Right ventricle myocardium superior (tissue), 1 donor: ENCODE measurements at regions of chr2 and their contacts with region 1.

Region 1: DNA sequence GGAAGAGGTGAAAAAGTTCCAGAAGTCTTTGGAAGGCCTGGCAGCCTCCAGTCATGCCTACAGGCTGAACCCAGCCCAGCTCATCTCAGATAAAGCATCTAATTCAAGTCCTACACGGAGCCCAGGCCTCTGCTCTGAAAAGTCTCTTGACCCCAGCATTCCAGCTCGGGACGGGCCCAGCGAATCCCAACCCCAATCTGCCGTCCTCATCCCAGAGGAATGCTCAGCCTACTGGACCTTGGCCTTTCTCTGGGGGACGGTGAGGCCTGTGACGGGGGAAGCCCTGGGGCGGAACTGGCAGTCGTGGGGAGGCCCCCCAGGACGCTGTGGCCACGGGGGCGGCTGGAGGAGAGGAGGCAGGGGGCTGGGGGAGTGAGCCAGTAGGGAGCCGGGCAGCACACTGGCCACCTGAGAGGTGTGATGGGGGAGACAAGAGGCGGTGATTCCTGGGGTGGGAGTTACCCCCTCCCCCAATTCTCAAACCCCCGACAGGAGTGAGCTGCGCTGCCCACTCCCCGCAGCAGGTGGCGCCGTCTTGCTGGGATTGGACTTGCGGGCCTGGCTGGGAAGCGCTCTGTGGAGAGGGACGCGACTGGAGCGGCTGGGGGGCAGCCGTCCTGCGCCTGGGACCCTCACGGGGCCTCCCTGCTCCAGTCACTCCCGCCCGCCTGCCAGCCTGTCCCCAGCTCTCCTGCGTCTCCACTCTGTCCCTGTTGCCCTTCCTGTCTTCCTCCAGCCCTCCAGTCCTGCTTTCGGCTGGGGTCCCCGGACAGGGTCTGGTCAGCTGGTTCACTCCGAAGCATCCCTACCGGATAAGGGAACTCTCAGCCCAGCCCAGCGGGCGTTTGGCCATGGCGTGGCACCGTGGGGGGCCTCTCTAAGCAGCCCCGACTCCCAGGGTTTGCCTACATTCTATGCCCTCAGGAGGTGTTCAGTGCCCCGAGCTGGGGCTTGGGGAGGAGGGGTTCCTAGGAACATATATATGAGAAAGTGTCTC is 182.6 kb upstream of the HAAO start:
- DNase-seq: peak; percentile 89
- ATAC-seq: peak; percentile 92

Region 2: GRCh38 chr2:42132966-42133641 is 841.9 kb before region 1 on chr2:
- intact Hi-C with region 1: no loop called
- DNase-seq: peak; percentile 87
- ATAC-seq: peak; percentile 89

Region 3: GRCh38 chr2:42906557-42907411 is 68.2 kb before region 1 on chr2:
- intact Hi-C with region 1: no loop called
- DNase-seq: peak; percentile 82
- ATAC-seq: peak; percentile 59

Region 4: GRCh38 chr2:43131024-43131889 is 156.2 kb after region 1 on chr2:
- intact Hi-C with region 1: loop called (anchors 10 kb)
- DNase-seq: peak; percentile 82
- ATAC-seq: peak; percentile 45